HCT116 (cell line): ENCODE measurements at regions of chr1 and their contacts with region 1.

Region 1: DNA sequence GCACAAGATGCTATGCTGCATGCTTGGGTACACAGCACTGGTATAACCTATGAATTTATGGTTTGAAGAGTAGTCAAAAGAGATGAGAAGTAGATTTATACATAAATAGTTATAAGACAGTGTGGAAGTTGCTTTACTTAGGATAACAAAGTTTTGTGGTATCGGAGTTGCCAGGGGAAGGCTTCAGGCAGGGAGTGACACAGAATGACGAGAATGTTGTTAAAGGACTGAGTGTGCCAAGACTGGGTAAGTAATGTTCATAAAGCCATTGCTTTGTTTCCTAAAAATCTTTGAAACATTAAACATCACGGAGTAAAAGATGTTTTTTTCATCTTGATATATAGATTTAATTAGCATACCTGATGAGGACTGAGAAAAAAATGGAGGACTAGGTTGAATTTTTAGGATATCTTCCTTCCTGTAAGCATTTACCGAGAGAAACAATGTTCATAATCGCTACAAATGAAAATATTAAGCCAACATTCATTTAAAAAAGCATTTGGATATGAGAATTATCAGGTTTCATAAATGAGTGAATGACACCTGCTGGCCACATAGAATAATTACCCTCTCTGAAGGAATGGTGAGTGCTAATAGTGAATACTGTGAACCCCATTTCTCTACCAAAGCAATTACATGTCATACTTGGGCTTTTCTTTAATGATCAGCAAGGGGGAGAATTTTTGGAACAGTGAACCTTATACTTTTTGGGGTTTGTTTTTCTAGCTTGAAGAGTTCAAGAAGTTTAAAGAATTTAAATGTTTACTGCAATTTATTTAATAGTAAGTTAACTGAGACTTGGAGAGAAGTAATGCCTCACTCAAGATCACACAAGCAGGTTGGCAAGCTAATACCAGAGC is 28.4 kb downstream of the EXTL2 start:
- DNase-seq: peak; percentile 15
- ATAC-seq: peak; percentile 59; the same call in 1 of the 2 replicates
- H3K4me3 ChIP-seq: no peak overlapping the region
- H3K27ac ChIP-seq: no peak overlapping the region
- H3K4me1 ChIP-seq: peaks cover 0 to 6% of the 10 kb centered on the region in 2 experiments; a peak in 2 of 4 replicates
- H3K27me3 ChIP-seq: no peaks in the 10 kb centered on the region
- CTCF ChIP-seq: peak; percentile 41 to 60 (median 60); a peak in 4 of 6 replicates
- POLR2A ChIP-seq: no peak
- RAD21 ChIP-seq: peak; percentile 68

Region 2: DNA sequence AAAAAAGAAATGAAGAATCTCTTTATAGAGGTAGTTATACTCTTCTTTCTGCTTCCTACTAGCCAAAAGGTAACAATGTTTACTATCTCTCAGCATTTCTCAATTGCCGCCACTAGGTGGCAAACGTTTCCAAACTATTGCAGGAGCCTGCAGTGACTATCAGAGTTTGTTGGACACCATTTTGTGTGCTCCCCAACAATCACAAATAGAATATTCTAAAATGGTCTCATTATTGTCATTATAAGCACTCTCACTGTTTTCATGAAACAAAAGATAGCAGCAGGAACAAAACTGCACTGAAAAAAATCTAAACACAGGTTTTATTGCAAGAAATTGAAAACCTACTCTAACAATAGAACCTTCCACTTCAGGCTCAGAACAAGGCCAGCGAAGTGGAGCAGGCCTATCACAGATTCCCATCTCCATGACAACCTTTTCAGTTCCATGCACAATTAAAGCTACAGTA is 1685.9 kb before region 1 on chr1:
- CTCF ChIA-PET with region 1: no interaction called
- POLR2A ChIA-PET with region 1: no interaction called
- RAD21 ChIA-PET with region 1: no interaction called
- intact Hi-C with region 1: loop called (anchors 2 kb)
- DNase-seq: peak; percentile 79
- ATAC-seq: peak; percentile 97
- H3K4me3 ChIP-seq: no peak overlapping the region
- H3K27ac ChIP-seq: peak overlapping the region; percentile 38; the same call in 1 of the 2 replicates
- H3K4me1 ChIP-seq: peaks cover 2 to 3% of the 10 kb centered on the region in 2 experiments; a peak in 3 of 4 replicates
- H3K27me3 ChIP-seq: no peaks in the 10 kb centered on the region
- CTCF ChIP-seq: peak; percentile 71 to 83 (median 82)
- POLR2A ChIP-seq: no peak
- RAD21 ChIP-seq: peak; percentile 90

Region 3: DNA sequence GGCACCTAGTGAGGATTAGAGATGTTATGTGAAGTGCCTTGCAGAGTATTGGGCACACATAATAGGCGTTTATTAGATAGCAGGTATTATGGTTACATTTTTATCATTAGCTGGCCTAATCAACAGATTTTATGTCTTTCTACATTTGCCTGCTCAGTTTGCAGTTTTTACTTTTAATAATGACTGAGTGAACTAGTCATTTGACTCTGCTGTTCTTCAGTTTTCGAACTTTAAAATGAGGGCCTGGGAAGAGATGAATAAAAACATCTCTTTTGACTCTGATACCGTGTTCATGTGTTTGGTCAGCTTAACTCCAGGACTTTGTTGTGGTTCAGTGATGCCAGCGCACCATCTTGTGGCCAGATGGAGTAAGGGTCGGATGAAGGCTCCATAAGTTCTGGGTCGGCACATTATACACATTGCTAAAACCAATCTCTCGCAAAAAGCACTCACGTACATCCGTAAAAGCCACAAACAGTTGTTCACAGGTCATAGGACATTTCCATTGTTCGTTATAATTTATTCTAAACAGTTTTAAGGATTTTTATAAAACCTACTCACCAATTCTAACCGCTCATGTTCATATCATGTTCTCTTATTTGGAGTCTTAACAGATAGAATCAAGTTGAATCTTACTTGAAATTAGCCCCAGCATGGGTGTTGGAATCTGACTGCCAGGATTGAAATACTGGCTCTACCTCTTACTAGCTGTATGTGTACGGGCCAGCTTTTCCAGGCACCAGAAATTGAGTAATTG is 406.7 kb before region 1 on chr1:
- CTCF ChIA-PET with region 1: interaction called, 48 read pairs
- POLR2A ChIA-PET with region 1: no interaction called
- RAD21 ChIA-PET with region 1: interaction called, 6 to 10 read pairs
- intact Hi-C with region 1: loop called (anchors 1 kb)
- DNase-seq: peak; percentile 63
- ATAC-seq: peak; percentile 88
- H3K4me3 ChIP-seq: no peak overlapping the region
- H3K27ac ChIP-seq: no peak overlapping the region
- H3K4me1 ChIP-seq: no peaks in the 10 kb centered on the region
- H3K27me3 ChIP-seq: no peaks in the 10 kb centered on the region
- CTCF ChIP-seq: peak; percentile 71 to 84 (median 81); a peak in 5 of 6 replicates
- POLR2A ChIP-seq: no peak
- RAD21 ChIP-seq: peak; percentile 92

Region 4: DNA sequence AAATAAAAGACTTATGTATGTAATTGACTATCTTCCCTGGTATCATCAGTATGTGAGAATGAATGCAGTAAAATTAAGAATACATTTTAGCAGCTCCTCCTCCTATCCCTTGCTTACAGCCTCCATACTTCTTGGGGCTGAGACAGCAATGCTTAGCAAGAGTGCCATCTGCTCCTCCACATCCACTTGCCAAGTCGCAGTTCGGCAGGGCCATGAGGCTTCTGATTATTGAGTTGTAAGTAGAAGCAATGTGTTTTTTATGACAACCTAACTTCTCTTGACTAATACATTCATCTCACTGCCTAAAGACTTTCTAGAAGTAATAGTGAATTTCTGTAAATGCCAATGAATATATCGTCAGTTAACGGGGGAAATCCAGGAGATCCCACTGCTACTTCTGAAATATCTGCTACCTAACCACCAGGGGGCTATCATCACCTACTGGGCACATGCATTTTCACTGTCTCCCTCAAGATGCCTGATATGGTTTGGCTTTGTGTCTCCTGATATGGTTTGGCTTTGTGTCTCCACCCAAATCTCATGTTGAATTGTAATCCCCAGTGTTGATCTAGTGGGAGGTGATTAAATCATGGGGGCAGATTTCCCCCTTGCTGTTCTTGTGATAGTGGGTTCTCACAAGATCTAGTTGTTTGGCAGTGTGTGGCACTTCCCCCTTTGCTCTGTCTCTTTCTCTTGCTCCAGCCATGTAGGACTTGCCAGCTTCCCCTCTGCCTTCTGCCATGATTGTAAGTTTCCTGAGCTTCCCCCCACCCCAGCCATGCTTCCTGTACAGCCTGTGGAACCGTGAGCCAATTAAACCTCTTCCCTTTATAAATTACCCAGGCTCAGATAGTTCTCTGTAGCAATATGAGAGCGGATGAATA is 31.3 kb before region 1 on chr1:
- CTCF ChIA-PET with region 1: interaction called, 3 read pairs
- POLR2A ChIA-PET with region 1: no interaction called
- RAD21 ChIA-PET with region 1: no interaction called
- intact Hi-C with region 1: loop called (anchors 2 kb)
- DNase-seq: peak; percentile 29
- ATAC-seq: peak; percentile 95
- H3K4me3 ChIP-seq: no peak overlapping the region
- H3K27ac ChIP-seq: no peak overlapping the region
- H3K4me1 ChIP-seq: no peaks in the 10 kb centered on the region
- H3K27me3 ChIP-seq: no peaks in the 10 kb centered on the region
- CTCF ChIP-seq: peak; percentile 33 to 68 (median 67); a peak in 5 of 6 replicates
- POLR2A ChIP-seq: no peak
- RAD21 ChIP-seq: peak; percentile 47

Region 5: GRCh38 chr1:101288491-101288944 is 422.2 kb after region 1 on chr1:
- CTCF ChIA-PET with region 1: interaction called, 14 read pairs
- POLR2A ChIA-PET with region 1: no interaction called
- RAD21 ChIA-PET with region 1: no interaction called
- intact Hi-C with region 1: no loop called
- DNase-seq: peak; percentile 72
- ATAC-seq: peak; percentile 94
- H3K4me3 ChIP-seq: peak overlapping the region in 1 of 2 experiments; percentile 30; a peak in 2 of 4 replicates
- H3K27ac ChIP-seq: no peak overlapping the region
- H3K4me1 ChIP-seq: peaks cover 0 to 6% of the 10 kb centered on the region in 2 experiments; a peak in 1 of 4 replicates
- H3K27me3 ChIP-seq: no peaks in the 10 kb centered on the region; the same call in 1 of the 2 replicates
- CTCF ChIP-seq: peak; percentile 74 to 98 (median 89)
- POLR2A ChIP-seq: no peak
- RAD21 ChIP-seq: peak; percentile 90